ENCODE measurements at regions of chr17 and their contacts with region 1.

Region 1: GRCh38 chr17:43024407-43025289 is at the start of gene RND2:
- DNase-seq: peak; percentile 77 to 95
- H3K4me3 ChIP-seq: peak within 1 kb of the TSS; percentile 50 to 76
- H3K27ac ChIP-seq: peak within 1 kb of the TSS; percentile 64 to 76
- H3K4me1 ChIP-seq: peaks cover 0 to 21% of the 10 kb centered on the region in 2 donors
- H3K27me3 ChIP-seq: no peaks in the 10 kb centered on the region
- CTCF ChIP-seq: peak; percentile 74 to 89 (median 82)
- total RNA-seq, gene RND2: 7.3 TPM

Region 2: DNA sequence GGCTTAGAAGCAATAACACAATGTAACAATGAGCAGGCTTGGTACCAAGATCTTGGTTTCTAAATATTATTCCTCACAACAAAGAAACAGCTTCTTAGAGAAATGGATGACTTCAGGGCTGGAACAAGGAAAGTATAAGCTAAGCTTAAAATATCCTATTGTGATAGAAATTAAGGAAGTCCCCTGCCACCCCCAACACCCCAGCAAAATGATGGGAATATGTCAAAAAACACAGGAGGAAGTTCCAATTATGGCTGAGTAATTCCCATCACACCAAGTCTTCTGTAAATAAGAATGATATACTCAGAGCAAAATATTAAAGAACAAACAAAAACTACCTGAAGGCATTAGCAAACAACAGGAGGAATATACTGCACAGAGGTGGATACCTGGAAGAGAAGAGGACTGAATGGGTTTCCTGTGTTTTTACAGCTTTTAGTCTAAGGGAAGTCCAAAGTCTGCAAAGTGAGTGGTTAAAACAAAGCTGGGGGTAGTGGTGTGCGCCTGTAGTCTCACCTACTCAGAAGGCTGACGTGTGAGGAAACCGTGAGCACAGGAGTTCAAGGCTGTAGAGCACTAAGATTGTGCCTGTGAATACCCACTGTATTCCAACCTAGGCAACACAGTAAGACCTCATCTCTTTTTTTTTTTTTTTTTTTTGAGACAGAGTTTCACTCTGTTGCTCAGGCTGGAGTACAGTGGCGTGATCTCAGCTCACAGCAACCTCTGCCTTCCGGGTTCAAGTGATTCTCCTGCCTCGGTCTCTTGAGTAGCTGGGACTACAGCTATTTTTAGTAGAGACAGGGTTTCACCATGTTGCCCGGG is 583.1 kb before region 1 on chr17:
- intact Hi-C with region 1: no loop called
- DNase-seq: no peak
- H3K4me3 ChIP-seq: no peak overlapping the region
- H3K27ac ChIP-seq: no peak overlapping the region
- H3K4me1 ChIP-seq: no peaks in the 10 kb centered on the region
- H3K27me3 ChIP-seq: no peaks in the 10 kb centered on the region
- CTCF ChIP-seq: no peak

Region 3: DNA sequence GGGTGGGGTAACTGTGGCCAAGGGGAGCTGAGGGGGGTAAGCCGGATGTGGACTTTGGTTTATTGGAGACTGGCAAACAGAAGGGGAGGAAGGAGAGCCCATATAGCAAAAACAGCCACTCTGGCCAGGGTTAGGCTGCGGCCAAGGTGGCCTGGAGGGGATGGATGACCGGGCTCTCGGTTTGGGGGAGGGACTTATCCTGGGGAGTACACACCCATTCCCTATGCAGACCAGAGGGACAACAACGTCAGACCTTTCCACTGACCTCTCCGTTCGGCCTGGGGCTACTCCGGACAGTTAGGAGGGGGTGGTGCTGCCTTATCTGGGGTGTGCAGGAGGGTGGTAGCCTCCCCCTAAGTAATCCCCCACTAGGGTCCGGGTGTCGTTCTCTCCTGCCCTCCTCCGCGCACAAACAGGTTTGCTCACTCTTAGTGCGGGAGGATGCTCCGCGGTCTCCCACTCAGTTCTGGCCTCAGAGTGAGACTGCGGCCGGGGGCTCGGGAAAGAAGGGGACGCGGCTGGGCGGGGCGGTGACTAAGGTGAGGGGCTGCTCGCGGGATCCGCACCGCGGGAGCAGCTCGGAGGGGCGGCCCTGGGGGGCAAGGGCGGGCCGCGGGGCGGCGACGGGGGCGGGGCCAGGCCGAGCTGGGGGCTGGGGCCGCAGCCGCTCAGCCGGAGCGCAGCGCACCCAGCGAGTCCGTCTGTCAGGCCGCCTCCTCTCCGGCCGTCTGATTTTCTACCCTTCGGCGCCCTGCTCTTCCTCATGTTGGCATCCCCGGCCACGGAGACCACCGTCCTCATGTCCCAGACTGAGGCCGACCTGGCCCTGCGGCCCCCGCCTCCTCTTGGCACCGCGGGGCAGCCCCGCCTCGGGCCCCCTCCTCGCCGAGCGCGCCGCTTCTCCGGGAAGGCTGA is 244.5 kb before region 1 on chr17 and contains the start of gene WNK4:
- intact Hi-C with region 1: no loop called
- DNase-seq: no peak
- H3K4me3 ChIP-seq: peak within 1 kb of the TSS; percentile 45 to 47
- H3K27ac ChIP-seq: no peak within 1 kb of the TSS
- H3K4me1 ChIP-seq: peaks cover 6% of the 10 kb centered on the region in 2 donors
- H3K27me3 ChIP-seq: peaks cover 12% of the 10 kb centered on the region
- CTCF ChIP-seq: no peak
- total RNA-seq, gene WNK4: not detected

Region 4: DNA sequence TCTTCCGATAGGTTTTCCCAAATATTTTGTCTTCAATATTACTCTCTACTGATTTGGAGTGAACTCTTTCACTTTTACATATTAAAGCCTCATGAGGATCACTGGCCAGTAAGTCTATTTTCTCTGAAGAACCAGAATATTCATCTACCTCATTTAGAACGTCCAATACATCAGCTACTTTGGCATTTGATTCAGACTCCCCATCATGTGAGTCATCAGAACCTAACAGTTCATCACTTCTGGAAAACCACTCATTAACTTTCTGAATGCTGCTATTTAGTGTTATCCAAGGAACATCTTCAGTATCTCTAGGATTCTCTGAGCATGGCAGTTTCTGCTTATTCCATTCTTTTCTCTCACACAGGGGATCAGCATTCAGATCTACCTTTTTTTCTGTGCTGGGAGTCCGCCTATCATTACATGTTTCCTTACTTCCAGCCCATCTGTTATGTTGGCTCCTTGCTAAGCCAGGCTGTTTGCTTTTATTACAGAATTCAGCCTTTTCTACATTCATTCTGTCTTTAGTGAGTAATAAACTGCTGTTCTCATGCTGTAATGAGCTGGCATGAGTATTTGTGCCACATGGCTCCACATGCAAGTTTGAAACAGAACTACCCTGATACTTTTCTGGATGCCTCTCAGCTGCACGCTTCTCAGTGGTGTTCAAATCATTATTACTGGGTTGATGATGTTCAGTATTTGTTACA is 69.6 kb after region 1 on chr17:
- intact Hi-C with region 1: loop called (anchors 1 kb)
- DNase-seq: peak in 1 of 2 donors; percentile 69
- H3K4me3 ChIP-seq: no peak overlapping the region
- H3K27ac ChIP-seq: peak overlapping the region; percentile 47 to 73
- H3K4me1 ChIP-seq: peaks cover 8 to 30% of the 10 kb centered on the region in 2 donors
- H3K27me3 ChIP-seq: no peaks in the 10 kb centered on the region
- CTCF ChIP-seq: no peak

Region 5: DNA sequence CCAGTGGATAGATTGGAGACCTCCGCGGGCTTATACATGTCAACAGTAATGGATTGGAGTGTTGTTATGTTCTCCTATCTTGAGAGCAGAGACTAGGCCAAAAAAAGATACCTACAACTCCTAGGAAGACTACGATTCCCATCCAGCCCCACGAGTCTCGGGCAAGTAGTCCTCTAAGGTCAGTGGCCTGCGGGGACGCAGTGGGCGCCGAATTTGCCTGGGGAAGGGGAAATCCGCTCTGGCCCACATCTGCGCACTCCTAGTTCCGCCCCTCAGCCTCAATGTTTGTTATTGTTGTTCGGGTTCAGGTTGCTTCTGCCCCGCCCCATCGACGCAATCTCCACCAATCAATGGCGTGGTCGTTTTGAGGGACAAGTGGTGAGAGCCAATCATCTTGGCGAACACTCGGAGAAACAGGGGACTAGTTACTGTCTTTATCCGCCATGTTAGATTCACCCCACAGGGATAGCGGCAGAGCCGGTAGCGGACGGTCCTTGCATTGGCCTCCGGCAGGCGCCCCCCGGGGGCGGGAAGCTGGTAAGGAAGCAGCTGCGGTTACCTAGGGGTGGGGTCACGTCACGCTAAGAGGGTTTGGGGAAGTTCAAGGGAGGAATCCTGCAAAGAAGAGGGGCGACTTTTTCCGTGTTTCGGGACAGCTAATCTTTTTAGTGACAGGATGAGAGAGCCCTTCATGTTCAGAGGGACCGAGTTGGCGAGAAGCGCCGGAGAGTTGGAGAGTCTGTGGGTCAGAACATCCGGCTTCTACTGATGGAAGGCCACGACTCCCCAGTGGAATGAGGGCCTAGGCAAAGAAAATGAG is 146.3 kb after region 1 on chr17 and contains the start of gene NBR1:
- intact Hi-C with region 1: loop called (anchors 1 kb)
- DNase-seq: peak; percentile 95 to 98
- H3K4me3 ChIP-seq: peak within 1 kb of the TSS; percentile 76 to 82
- H3K27ac ChIP-seq: peak within 1 kb of the TSS; percentile 97 to 99
- H3K4me1 ChIP-seq: peaks cover 0 to 41% of the 10 kb centered on the region in 2 donors
- H3K27me3 ChIP-seq: no peaks in the 10 kb centered on the region
- CTCF ChIP-seq: no peak
- total RNA-seq, gene NBR1: 45.6 TPM

Region 6: GRCh38 chr17:43334738-43335402 is 310.2 kb after region 1 on chr17:
- intact Hi-C with region 1: loop called (anchors 2 kb)
- DNase-seq: no peak
- H3K4me3 ChIP-seq: no peak overlapping the region
- H3K27ac ChIP-seq: no peak overlapping the region
- H3K4me1 ChIP-seq: peaks cover 0 to 6% of the 10 kb centered on the region in 2 donors
- H3K27me3 ChIP-seq: no peaks in the 10 kb centered on the region
- CTCF ChIP-seq: no peak

Measured in ascending aorta (tissue), 2 donors.